Transverse colon (tissue), 4 donors: ENCODE measurements at regions of chr18 and their contacts with region 1.

Region 1: GRCh38 chr18:59814891-59815290 is 84.9 kb upstream of the PMAIP1 start:
- DNase-seq: no peak
- H3K4me3 ChIP-seq: no peak overlapping the region
- H3K27ac ChIP-seq: no peak overlapping the region
- H3K4me1 ChIP-seq: no peaks in the 10 kb centered on the region
- H3K27me3 ChIP-seq: no peaks in the 10 kb centered on the region
- CTCF ChIP-seq: no peak
- EP300 ChIP-seq: no peak
- POLR2A ChIP-seq: no peak

Region 2: DNA sequence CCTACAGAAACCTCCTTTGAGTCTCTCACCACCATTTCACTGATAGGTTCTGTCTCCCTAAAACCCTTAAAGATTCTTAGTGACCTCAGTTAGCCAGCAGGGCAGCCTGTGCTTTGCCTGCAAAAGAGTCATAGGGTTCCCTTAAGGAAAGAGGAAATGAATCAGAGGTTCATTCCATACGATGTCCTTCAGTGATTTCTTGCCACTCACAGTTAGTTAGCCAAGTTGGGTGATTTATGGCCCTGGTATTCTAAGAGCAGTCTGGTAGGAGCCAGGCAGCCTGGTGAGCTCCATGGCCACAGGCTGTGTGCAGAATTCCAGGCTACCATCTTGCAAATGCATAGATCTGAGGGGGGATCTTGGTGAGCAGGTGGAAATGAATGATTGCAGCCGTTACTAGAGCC is 98.9 kb before region 1 on chr18:
- in situ Hi-C with region 1: no loop called
- intact Hi-C with region 1: loop called (anchors 10 kb)
- DNase-seq: no peak
- H3K4me3 ChIP-seq: no peak overlapping the region
- H3K27ac ChIP-seq: no peak overlapping the region
- H3K4me1 ChIP-seq: no peaks in the 10 kb centered on the region
- H3K27me3 ChIP-seq: no peaks in the 10 kb centered on the region
- CTCF ChIP-seq: no peak
- EP300 ChIP-seq: no peak
- POLR2A ChIP-seq: no peak